Sciatic nerve (tissue), 2 donors: ENCODE measurements at regions of chr19 and their contacts with region 1.

Region 1: DNA sequence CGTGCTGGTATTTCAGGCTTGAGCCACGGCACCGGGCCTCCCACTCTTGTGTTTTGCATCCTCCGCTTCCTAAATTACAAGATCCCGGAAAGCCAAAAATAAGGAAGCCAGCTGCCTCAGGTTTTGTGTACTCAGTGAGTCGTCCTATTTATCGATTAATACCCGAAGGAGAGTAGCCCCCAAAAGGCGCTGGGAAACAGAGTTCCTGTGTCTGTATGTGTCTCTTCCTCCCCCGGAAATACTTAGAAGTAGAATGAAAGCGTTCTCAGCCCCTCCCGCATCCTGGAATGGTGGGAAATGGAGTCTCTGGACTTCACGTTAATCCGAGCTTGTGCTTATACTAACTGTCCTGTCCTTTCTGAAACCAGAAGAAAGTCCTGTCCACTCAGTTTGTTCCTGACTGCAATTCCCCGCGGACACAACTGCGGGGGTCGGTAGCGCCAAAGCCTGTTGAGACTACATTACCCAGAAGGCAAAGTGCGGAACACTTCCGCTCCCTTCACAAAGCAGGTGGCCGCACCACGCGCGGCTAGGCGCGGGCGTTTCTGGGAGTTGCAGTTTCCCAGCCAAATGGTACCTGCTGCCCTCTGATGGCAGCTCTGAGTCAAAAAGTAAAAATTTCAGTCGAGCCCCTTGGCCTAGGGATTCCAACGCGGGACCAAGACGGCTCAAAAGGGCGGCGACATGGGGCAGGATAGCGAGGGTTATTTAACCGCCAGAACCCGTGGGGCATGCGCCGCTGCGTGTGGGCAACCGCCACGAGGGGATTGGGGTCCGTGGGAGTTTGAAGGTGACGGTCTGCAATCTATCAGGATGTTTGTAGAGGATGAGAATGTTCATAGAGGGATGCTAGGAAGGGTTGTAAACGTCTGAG is 2.2 kb upstream of the GSK3A start:
- DNase-seq: peak; percentile 94
- ATAC-seq: peak; percentile 67

Region 2: GRCh38 chr19:42081584-42082203 is 162.9 kb before region 1 on chr19:
- intact Hi-C with region 1: no loop called
- DNase-seq: no peak
- ATAC-seq: no peak

Region 3: DNA sequence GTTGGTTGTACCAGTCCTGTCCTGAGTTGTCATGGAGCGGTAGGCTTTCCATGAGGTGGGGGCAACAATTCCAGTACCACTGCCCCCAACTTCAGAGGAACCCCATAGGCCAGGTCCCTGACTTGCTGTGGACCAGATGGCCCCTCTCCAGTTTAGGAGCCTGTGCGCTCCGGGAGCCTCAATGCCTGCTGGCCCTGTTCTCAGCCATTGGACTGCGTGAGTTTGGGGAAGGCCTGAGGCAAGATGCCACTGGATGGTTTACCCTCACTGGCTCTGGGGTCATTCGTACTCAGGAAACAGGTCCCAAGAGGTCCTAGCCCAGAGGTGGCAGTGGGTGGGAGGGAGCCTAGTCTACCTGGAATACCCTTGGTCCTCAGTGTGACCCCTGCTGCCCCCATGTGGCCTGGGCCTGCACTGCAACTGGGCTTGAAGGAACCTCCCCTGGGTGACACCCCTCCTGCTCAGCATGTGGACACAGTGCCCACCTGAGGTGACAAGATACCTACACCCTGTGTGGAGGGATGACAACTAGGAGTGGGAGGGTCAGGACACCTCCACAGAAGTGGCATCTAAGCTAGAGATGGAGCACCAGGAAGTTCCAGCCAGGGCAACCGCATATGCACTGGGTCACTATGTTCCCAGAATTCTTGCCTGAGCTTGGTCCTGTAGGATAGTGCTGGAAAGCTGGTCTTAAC is 51.4 kb after region 1 on chr19:
- intact Hi-C with region 1: loop called (anchors 10 kb)
- DNase-seq: peak; percentile 91
- ATAC-seq: peak; percentile 77